ENCODE measurements at regions of chr1 and their contacts with region 1.

Region 1: DNA sequence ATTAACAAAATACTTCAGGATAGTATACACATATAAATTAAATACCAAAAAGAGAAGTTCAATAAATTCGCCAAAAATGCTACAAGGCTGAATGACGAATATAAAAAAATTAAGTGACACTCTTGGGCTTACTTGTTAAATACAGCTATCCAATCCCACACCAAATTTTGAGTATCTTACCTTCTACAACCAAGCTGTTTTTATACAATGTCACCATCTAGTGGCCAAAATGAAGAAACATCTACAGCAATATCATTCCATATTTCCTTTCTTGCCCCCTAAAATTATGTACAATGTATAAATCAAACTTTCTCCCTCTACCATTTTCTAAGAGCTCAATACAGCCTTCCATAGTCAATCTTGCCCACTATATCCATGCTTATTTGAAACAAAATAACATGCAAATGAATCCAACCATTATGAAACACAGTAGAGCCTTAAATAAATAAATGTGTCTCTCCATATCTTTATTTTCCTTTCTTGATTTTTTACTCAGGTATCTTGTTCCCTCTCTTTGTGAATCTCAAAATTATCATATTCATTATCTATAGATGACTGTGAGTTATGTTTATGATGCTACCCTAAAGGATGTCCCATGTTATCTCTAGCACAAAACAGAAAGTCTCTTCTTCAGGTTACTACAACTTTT is 86.3 kb downstream of the ACBD6 start:
- DNase-seq: no peak
- ATAC-seq: no peak
- H3K4me3 Mint-ChIP-seq: no peak overlapping the region
- H3K27ac Mint-ChIP-seq: no peak overlapping the region
- H3K4me1 Mint-ChIP-seq: no peaks in the 10 kb centered on the region
- H3K27me3 Mint-ChIP-seq: no peaks in the 10 kb centered on the region

Region 2: DNA sequence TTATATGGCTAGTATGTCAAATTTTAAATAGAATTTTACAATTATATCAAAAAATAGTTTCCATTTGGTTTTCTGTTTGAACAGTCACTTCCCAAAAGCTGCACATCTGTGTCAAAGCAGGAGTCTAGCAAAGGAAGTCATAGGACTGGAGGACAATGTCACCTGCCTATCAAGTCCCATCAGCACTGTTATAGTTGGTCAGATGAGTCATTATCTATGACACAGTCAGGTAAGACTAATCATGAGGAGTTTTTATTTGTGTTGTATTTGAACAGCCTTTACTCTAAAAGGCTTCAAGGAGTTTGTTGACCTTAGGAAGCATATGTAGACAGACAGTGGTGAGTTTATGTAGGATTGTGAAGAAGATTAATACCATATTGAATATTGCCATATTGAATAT is 335.7 kb before region 1 on chr1:
- CTCF ChIA-PET with region 1: no interaction called
- POLR2A ChIA-PET with region 1: no interaction called
- DNase-seq: no peak
- ATAC-seq: no peak
- H3K4me3 Mint-ChIP-seq: no peak overlapping the region
- H3K27ac Mint-ChIP-seq: no peak overlapping the region
- H3K4me1 Mint-ChIP-seq: no peaks in the 10 kb centered on the region
- H3K27me3 Mint-ChIP-seq: no peaks in the 10 kb centered on the region

Region 3: GRCh38 chr1:180252638-180253536 is 163.2 kb before region 1 on chr1:
- CTCF ChIA-PET with region 1: interaction called, 17 read pairs
- POLR2A ChIA-PET with region 1: no interaction called
- DNase-seq: peak; percentile 80
- ATAC-seq: peak; percentile 59
- H3K4me3 Mint-ChIP-seq: no peak overlapping the region
- H3K27ac Mint-ChIP-seq: no peak overlapping the region
- H3K4me1 Mint-ChIP-seq: no peaks in the 10 kb centered on the region
- H3K27me3 Mint-ChIP-seq: peaks cover 2% of the 10 kb centered on the region

Region 4: DNA sequence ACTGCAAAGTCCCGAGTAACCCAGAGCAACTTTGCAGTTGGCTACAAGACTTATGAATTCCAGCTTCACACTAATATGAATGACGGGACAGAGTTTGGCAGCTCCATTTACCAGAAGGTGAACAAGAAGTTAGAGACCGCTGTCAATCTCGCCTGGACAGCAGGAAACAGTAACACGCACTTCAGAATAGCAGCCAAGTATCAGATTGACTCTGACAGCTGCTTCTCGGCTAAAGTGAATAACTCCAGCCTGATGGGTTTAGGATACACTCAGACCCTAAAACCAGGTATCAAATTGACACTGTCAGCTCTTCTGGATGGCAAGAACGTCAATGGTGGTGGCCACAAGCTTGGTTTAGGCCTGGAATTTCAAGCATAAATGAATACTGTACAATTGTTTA is 19.5 kb after region 1 on chr1:
- CTCF ChIA-PET with region 1: no interaction called
- POLR2A ChIA-PET with region 1: no interaction called
- DNase-seq: no peak
- ATAC-seq: no peak
- H3K4me3 Mint-ChIP-seq: no peak overlapping the region
- H3K27ac Mint-ChIP-seq: no peak overlapping the region
- H3K4me1 Mint-ChIP-seq: no peaks in the 10 kb centered on the region
- H3K27me3 Mint-ChIP-seq: no peaks in the 10 kb centered on the region